Activated CD4-positive, alpha-beta memory T cell treated with anti-CD3 and anti-CD28 coated beads for 36 hours (primary cell): ENCODE measurements at regions of chr1 and their contacts with region 1.

Region 1: DNA sequence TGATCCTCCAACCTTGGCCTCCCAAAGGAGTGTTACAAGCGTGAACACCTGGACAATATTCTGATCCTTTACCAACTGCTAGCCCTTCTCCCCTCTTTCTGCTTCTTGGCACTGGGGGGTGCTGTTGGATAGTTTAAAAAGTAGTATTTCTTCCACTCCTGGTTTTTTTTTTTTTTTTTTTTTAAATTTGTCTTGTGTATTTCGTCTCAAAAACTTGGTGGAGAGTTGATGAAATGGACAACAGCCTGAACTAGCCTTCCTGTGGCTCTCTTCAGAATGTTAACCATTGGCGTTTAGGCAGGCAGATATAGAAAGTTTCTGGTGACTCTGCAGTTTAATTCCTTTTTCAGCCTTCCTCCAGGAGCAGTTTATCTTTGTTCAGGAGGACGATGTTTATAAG is 69.7 kb upstream of the USP24 start:
- DNase-seq: peak; percentile 24
- H3K4me3 Mint-ChIP-seq: no peak overlapping the region
- H3K27ac Mint-ChIP-seq: no peak overlapping the region
- H3K4me1 Mint-ChIP-seq: peaks cover 25% of the 10 kb centered on the region
- H3K27me3 Mint-ChIP-seq: peaks cover 1% of the 10 kb centered on the region

Region 2: DNA sequence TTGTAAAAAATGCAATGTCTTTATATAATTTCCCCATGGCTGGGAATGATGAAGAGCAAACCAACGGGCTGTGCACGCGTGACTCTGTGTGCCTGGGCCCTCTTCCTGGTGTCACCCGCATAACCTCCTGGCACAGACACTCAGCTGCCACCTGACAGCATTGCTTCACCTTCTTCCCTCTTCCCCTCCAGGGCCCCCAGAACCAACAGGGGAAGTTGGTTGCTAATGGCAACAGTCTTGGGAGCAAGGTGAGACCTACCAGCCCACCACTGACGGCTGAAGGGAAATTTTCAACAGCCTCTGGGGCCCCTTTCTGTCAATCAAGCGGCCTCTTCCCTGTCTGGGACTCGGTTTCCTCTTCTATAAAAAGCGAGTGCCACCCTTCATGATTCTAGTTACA is 911.9 kb before region 1 on chr1:
- CTCF ChIA-PET with region 1: no interaction called
- POLR2A ChIA-PET with region 1: no interaction called
- intact Hi-C with region 1: no loop called
- DNase-seq: no peak
- H3K4me3 Mint-ChIP-seq: no peak overlapping the region
- H3K27ac Mint-ChIP-seq: no peak overlapping the region
- H3K4me1 Mint-ChIP-seq: peaks cover 38% of the 10 kb centered on the region
- H3K27me3 Mint-ChIP-seq: no peaks in the 10 kb centered on the region

Region 3: DNA sequence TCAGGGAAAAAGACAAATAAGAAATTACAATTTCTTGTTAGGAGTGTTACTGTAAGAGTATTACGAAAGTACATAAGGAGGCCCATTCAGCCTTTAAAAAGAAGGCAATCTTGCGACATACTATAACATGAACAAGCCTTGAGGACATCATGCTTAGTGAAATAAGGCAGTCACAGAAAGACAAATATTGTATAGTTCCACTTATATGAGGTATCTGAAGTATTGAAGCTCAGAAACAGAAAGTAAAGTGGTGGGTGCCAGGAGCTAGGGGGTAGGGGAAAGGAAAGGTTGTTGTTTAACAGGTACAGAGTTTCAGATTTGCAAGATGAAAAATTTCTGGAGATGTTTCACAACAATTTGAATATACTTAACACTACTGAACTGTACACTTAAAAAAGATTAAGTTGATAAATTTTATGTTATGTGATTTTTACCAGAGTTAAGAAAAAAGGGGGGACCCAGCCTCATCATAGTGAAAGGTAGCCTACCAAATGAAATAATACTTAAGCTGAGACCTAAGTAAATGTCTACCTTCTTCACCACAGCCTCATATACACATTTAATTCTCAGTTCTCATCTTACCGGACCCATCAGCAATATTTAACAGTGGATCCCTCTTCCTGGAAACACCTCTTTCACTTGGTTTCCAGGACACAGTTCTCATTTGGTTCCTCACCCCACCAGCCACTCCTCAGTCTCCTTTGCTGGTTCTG is 89.2 kb before region 1 on chr1:
- CTCF ChIA-PET with region 1: no interaction called
- POLR2A ChIA-PET with region 1: no interaction called
- intact Hi-C with region 1: no loop called
- DNase-seq: no peak
- H3K4me3 Mint-ChIP-seq: no peak overlapping the region
- H3K27ac Mint-ChIP-seq: peak overlapping the region; percentile 73
- H3K4me1 Mint-ChIP-seq: peaks cover 61% of the 10 kb centered on the region
- H3K27me3 Mint-ChIP-seq: no peaks in the 10 kb centered on the region

Region 4: GRCh38 chr1:55337801-55338447 is 53.1 kb after region 1 on chr1:
- CTCF ChIA-PET with region 1: interaction called, 17 read pairs
- POLR2A ChIA-PET with region 1: no interaction called
- intact Hi-C with region 1: loop called (anchors 1 kb)
- DNase-seq: peak; percentile 25
- H3K4me3 Mint-ChIP-seq: no peak overlapping the region
- H3K27ac Mint-ChIP-seq: no peak overlapping the region
- H3K4me1 Mint-ChIP-seq: no peaks in the 10 kb centered on the region
- H3K27me3 Mint-ChIP-seq: peaks cover 2% of the 10 kb centered on the region

Region 5: GRCh38 chr1:55428944-55429931 is 144.4 kb after region 1 on chr1:
- CTCF ChIA-PET with region 1: no interaction called
- POLR2A ChIA-PET with region 1: no interaction called
- intact Hi-C with region 1: no loop called
- DNase-seq: no peak
- H3K4me3 Mint-ChIP-seq: no peak overlapping the region
- H3K27ac Mint-ChIP-seq: no peak overlapping the region
- H3K4me1 Mint-ChIP-seq: no peaks in the 10 kb centered on the region
- H3K27me3 Mint-ChIP-seq: peaks cover 12% of the 10 kb centered on the region

Region 6: GRCh38 chr1:56584910-56585528 is 1300.2 kb after region 1 on chr1:
- CTCF ChIA-PET with region 1: interaction called, 8 read pairs
- POLR2A ChIA-PET with region 1: no interaction called
- intact Hi-C with region 1: loop called (anchors 5 kb)
- DNase-seq: no peak
- H3K4me3 Mint-ChIP-seq: no peak overlapping the region
- H3K27ac Mint-ChIP-seq: no peak overlapping the region
- H3K4me1 Mint-ChIP-seq: no peaks in the 10 kb centered on the region
- H3K27me3 Mint-ChIP-seq: peaks cover 13% of the 10 kb centered on the region

Region 7: DNA sequence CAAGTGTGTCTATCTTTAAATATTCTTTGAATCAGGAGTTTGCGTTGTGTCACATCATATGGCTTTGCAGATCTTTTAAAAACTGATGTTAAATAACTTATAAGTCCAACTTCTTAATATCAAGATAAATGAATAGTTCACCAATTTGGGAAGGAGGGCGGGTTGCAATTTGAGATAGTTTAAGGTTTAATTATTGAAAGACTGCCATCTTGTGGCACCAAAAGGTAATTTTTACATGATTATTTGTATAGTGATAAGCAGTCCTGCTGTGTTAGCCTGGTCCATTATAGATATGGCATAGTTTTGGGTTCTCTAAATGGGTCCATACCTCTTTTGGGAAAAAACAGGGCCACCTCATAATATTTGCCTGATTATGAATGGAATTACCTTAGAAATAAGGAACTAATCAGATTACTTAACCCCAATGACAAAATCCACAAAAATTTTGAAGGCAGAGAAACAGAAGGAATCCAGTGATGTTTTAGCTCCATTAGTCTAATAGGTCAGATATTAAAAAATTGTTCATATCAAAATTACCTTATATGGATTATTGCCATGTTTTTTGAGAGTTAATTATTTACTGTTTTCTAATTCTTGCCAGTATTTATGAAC is 1424.5 kb after region 1 on chr1:
- CTCF ChIA-PET with region 1: interaction called, 13 read pairs
- POLR2A ChIA-PET with region 1: no interaction called
- intact Hi-C with region 1: loop called (anchors 10 kb)
- DNase-seq: no peak
- H3K4me3 Mint-ChIP-seq: no peak overlapping the region
- H3K27ac Mint-ChIP-seq: no peak overlapping the region
- H3K4me1 Mint-ChIP-seq: no peaks in the 10 kb centered on the region
- H3K27me3 Mint-ChIP-seq: peaks cover 13% of the 10 kb centered on the region